Dorsolateral prefrontal cortex (tissue), 120 donors: ENCODE measurements at regions of chrX and their contacts with region 1.

Region 1: GRCh38 chrX:39814391-39814790 is 283.4 kb downstream of the BCOR start:
- DNase-seq: no peak
- H3K4me3 ChIP-seq: no peak overlapping the region
- H3K27ac ChIP-seq: peak overlapping the region in 14 of 59 donors; percentile 9 to 57 (median 34)
- H3K27me3 ChIP-seq: peaks cover 0 to 87% (median 36%) of the 10 kb centered on the region in 45 donors
- CTCF ChIP-seq: peak in 55 of 56 donors; percentile 15 to 66 (median 44)

Region 2: GRCh38 chrX:39652336-39653131 is 161.9 kb before region 1 on chrX:
- intact Hi-C with region 1: loop called in 1 of 2 experiments (anchors 10 kb)
- DNase-seq: no peak
- H3K4me3 ChIP-seq: no peak overlapping the region
- H3K27ac ChIP-seq: peak overlapping the region in 24 of 59 donors; percentile 15 to 90 (median 80)
- H3K27me3 ChIP-seq: peaks cover 0 to 81% (median 27%) of the 10 kb centered on the region in 45 donors
- CTCF ChIP-seq: peak in 53 of 56 donors; percentile 15 to 71 (median 50)

Region 3: GRCh38 chrX:39714471-39714870 is 99.9 kb before region 1 on chrX:
- intact Hi-C with region 1: no loop called
- DNase-seq: no peak
- H3K4me3 ChIP-seq: no peak overlapping the region
- H3K27ac ChIP-seq: no peak overlapping the region
- H3K27me3 ChIP-seq: peaks cover 0 to 31% (median 1%) of the 10 kb centered on the region in 45 donors
- CTCF ChIP-seq: no peak

Region 4: DNA sequence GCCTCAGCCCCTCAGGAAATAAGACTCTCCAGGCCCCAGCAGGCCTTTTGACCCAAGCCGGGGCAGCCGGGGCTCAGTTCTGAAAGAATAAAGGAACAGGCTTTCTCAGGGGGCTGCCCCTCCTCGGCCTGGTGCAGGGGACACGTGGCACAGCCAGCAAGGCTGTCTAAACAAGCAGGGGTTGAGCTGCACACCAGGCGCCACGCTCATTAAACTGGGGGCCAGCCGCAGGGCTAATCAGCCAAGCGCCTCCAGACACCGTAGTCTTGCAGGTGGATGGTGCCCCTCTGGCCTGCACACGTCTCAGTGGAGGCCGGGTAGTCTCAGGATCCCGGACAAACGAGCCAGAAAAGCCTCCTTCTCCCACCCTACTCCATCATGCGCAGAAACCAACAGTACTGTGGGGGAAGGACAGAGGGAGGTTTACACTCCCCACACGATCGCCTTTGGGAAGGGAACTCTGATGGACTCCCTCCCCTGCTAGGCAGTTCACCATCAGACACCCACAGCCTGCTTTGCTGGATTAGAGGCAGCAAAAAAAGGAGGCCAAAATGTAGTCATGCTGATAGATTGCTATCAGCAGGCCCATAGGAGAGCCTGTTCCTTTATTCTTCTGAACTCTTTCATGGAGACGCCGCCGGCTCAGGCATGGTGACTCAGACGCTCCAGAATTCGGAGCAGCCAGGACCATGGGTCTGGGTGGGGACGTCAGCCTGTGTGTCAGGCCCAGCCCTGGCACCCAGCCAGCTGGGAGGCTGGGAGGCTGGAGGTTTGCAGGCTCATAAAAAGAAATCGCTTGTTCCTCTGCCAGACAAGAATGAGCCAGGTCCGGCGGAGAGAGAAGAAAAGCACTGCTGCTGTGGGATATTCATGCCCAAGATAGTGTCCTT is 59.0 kb before region 1 on chrX:
- intact Hi-C with region 1: loop called in 1 of 2 experiments (anchors 5 kb)
- DNase-seq: peak in 7 of 10 donors; percentile 6 to 67 (median 61)
- H3K4me3 ChIP-seq: no peak overlapping the region
- H3K27ac ChIP-seq: peak overlapping the region in 28 of 59 donors; percentile 3 to 70 (median 33)
- H3K27me3 ChIP-seq: peaks cover 0 to 50% (median 4%) of the 10 kb centered on the region in 45 donors
- CTCF ChIP-seq: no peak

Region 5: GRCh38 chrX:40097497-40098263 is 283.3 kb after region 1 on chrX and contains the start of gene BCOR:
- intact Hi-C with region 1: loop called (anchors 10 kb)
- DNase-seq: peak in 8 of 10 donors; percentile 38 to 75 (median 58)
- H3K4me3 ChIP-seq: peak within 1 kb of the TSS; percentile 49 to 87 (median 72)
- H3K27ac ChIP-seq: peak within 1 kb of the TSS; percentile 29 to 94 (median 87)
- H3K27me3 ChIP-seq: peaks cover 0 to 98% (median 69%) of the 10 kb centered on the region in 45 donors
- CTCF ChIP-seq: peak in 13 of 56 donors; percentile 7 to 35 (median 18)
- total RNA-seq, gene BCOR: 10.5 to 38.3 (median 19.7) TPM

Region 6: DNA sequence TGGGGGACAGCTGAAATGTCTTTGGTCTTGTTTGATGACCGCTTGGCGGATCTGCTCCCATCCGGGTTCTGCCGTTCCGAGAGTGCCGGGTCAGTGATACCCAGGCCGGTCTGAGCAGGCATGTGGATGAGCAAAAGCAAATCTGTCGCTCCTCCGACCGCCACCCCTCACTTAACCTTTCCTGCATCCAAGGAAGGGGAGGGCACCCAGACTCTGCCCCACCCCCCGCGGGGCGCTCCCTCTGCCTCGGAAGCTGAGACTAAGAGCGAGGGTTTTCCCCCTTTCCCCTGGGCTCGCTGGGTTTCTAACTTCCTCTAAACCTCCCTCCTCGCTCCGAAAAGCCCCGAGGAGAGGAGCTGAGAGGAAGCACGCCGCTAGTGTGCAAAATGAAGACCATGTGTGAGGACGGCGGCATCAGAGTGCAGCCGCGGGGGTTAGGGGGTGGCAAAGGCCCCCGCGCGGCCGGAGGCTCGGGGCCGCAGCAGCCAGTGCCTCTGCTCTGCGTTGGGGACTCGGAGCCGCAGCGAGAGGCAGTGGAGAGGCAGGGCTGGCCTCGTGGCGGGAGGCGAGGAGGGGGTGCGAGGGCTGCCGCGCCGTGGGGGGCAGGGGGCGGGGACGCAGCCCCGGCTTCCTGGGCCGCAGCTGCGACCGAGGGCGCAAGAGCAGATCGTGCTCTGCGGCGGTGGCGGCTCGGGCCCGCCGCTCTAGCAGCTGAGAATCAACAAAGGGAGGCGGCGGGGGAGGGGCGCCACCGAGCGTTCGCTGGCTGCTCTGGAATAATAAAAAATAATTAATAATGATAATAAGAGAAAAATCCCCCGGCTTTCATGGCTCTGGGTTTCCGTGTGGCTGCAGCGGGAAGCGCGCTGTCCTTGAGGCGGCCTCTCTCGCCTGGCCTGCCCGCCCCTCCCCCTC is 339.2 kb after region 1 on chrX:
- intact Hi-C with region 1: loop called in 1 of 2 experiments (anchors 5 kb)
- DNase-seq: peak in 3 of 10 donors; percentile 25 to 66 (median 46)
- H3K4me3 ChIP-seq: peak overlapping the region; percentile 20 to 70 (median 54)
- H3K27ac ChIP-seq: peak overlapping the region in 58 of 59 donors; percentile 12 to 88 (median 82)
- H3K27me3 ChIP-seq: peaks cover 0 to 100% (median 73%) of the 10 kb centered on the region in 45 donors
- CTCF ChIP-seq: peak in 39 of 56 donors; percentile 7 to 58 (median 36)

Region 7: GRCh38 chrX:40468033-40468846 is 653.8 kb after region 1 on chrX:
- intact Hi-C with region 1: loop called in 1 of 2 experiments (anchors 10 kb)
- DNase-seq: peak; percentile 16 to 87 (median 74)
- H3K4me3 ChIP-seq: peak overlapping the region in 2 of 59 donors; percentile 2 to 10
- H3K27ac ChIP-seq: peak overlapping the region in 43 of 59 donors; percentile 0 to 85 (median 59)
- H3K27me3 ChIP-seq: peaks cover 0 to 45% (median 8%) of the 10 kb centered on the region in 45 donors
- CTCF ChIP-seq: peak in 52 of 56 donors; percentile 22 to 74 (median 46)